ENCODE measurements at regions of chr11 and their contacts with region 1.

Region 1: DNA sequence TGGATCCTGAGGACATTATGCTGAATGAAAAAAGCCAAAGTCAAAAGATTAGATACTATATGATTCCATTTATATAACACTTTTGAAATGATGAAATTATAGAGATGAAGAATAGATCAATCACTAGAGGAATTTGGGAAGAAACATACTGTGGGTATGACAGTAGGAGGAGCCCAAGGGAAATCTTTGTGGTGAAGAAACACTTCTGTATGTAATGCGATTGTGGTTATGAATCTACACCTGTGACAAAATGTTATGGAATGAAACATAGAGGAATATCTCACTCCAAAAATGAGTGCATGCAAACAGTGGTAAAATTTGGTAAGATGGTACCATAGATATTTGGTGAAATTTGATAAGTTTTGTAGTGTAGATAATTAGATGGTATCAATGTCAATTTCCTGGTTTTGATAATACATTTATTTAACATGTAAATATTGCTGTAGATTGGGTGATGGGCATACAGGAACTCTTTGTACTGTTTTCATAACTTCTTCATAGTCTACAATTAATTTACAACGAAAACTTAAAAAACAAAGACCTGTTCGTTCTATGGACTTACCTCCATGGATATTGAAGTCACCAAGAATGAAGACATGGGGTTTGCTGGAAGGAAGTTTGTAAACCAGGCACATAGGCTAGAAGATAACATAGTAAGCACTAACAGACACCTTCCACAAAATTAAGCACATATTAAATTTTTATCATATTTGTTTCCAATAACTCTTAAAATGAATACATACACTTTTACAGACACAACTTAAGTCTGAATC is 11.5 kb downstream of the MRGPRX1 start:
- DNase-seq: no peak

Region 2: DNA sequence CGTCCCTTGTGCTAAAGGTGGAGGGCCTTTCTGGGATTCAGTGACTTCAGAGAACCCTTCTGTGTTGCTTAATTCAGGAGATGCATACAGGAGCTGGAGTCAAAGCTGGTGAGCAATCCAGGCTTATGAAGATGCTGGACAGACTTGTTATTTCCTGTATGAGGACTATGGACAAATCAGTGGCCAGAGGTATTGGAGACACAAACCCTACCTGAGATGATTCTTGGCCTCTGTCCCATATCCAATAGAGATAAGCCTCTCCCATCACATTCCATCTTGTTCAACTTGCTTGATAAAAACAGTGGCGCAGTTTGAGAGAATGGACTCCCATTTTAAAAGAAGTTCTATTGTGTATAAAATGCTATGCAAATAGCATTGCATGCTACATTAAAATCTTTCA is 11.6 kb after region 1 on chr11 and contains the start of gene MRGPRX1:
- intact Hi-C with region 1: loop called in 1 of 2 experiments (anchors 2 kb)
- DNase-seq: no peak
- total RNA-seq, gene MRGPRX1: not detected

Measured in posterior vena cava (tissue), 2 donors.